ENCODE measurements at regions of chr6 and their contacts with region 1.

Region 1: GRCh38 chr6:105669232-105669631 is 266.4 kb upstream of the PREP start:
- DNase-seq: no peak
- ATAC-seq: no peak
- H3K4me3 ChIP-seq: no peak overlapping the region
- H3K27ac ChIP-seq: no peak overlapping the region
- H3K4me1 ChIP-seq: no peaks in the 10 kb centered on the region
- H3K27me3 ChIP-seq: peaks cover 0 to 3% (median 0%) of the 10 kb centered on the region in 3 donors
- CTCF ChIP-seq: no peak

Region 2: GRCh38 chr6:105484238-105485161 is 184.7 kb before region 1 on chr6:
- intact Hi-C with region 1: no loop called
- DNase-seq: no peak
- ATAC-seq: peak in 2 of 4 donors; percentile 23 to 70
- H3K4me3 ChIP-seq: peak overlapping the region; percentile 5
- H3K27ac ChIP-seq: no peak overlapping the region
- H3K4me1 ChIP-seq: no peaks in the 10 kb centered on the region
- H3K27me3 ChIP-seq: no peaks in the 10 kb centered on the region
- CTCF ChIP-seq: peak; percentile 84

Region 3: GRCh38 chr6:105509506-105510331 is 159.5 kb before region 1 on chr6:
- intact Hi-C with region 1: loop called in 1 of 2 experiments (anchors 10 kb)
- DNase-seq: peak in 1 of 2 donors; percentile 56
- ATAC-seq: peak in 2 of 4 donors; percentile 45 to 52
- H3K4me3 ChIP-seq: no peak overlapping the region
- H3K27ac ChIP-seq: no peak overlapping the region
- H3K4me1 ChIP-seq: no peaks in the 10 kb centered on the region
- H3K27me3 ChIP-seq: no peaks in the 10 kb centered on the region
- CTCF ChIP-seq: peak; percentile 6

Region 4: DNA sequence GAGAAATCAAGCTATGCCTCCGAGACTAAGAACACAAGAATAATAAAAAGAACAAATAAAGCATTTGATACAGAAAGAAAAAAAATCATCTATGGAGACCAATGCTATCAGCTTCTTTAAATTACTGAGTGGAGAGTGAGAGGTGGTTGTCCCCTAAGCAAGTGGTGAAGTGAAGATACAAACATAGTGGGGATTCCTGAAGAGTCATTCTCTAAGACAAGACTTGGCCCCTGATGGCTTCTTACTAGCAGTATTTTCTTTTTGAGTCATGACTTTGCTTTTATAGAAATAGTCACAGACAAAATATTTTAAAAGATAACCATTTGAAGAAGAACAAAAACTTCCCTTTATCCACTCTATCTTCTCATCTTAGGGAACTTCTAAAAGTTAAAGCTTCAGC is 155.5 kb after region 1 on chr6:
- intact Hi-C with region 1: no loop called
- DNase-seq: no peak
- ATAC-seq: no peak
- H3K4me3 ChIP-seq: no peak overlapping the region
- H3K27ac ChIP-seq: no peak overlapping the region
- H3K4me1 ChIP-seq: no peaks in the 10 kb centered on the region
- H3K27me3 ChIP-seq: no peaks in the 10 kb centered on the region
- CTCF ChIP-seq: no peak

Measured in psoas muscle (tissue), 8 donors.